Activated naive CD4-positive, alpha-beta T cell treated with anti-CD3 and anti-CD28 coated beads for 36 hours (primary cell): ENCODE measurements at regions of chr3 and their contacts with region 1.

Region 1: GRCh38 chr3:186806089-186807055 is at the start of gene RFC4:
- DNase-seq: peak; percentile 92
- H3K4me3 Mint-ChIP-seq: peak within 1 kb of the TSS; percentile 91
- H3K27ac Mint-ChIP-seq: peak within 1 kb of the TSS; percentile 94
- H3K4me1 Mint-ChIP-seq: peaks cover 19% of the 10 kb centered on the region
- H3K27me3 Mint-ChIP-seq: no peaks in the 10 kb centered on the region
- total RNA-seq, gene RFC4: 135 to 136 TPM

Region 2: GRCh38 chr3:186514296-186515002 is 291.9 kb before region 1 on chr3:
- CTCF ChIA-PET with region 1: no interaction called
- intact Hi-C with region 1: no loop called
- DNase-seq: peak; percentile 71
- H3K4me3 Mint-ChIP-seq: no peak overlapping the region
- H3K27ac Mint-ChIP-seq: peak overlapping the region; percentile 78
- H3K4me1 Mint-ChIP-seq: peaks cover 79% of the 10 kb centered on the region
- H3K27me3 Mint-ChIP-seq: no peaks in the 10 kb centered on the region

Region 3: GRCh38 chr3:186746008-186746407 is 60.4 kb before region 1 on chr3:
- CTCF ChIA-PET with region 1: no interaction called
- intact Hi-C with region 1: no loop called
- DNase-seq: peak; percentile 11
- H3K4me3 Mint-ChIP-seq: no peak overlapping the region
- H3K27ac Mint-ChIP-seq: peak overlapping the region; percentile 54
- H3K4me1 Mint-ChIP-seq: peaks cover 3% of the 10 kb centered on the region
- H3K27me3 Mint-ChIP-seq: no peaks in the 10 kb centered on the region

Region 4: DNA sequence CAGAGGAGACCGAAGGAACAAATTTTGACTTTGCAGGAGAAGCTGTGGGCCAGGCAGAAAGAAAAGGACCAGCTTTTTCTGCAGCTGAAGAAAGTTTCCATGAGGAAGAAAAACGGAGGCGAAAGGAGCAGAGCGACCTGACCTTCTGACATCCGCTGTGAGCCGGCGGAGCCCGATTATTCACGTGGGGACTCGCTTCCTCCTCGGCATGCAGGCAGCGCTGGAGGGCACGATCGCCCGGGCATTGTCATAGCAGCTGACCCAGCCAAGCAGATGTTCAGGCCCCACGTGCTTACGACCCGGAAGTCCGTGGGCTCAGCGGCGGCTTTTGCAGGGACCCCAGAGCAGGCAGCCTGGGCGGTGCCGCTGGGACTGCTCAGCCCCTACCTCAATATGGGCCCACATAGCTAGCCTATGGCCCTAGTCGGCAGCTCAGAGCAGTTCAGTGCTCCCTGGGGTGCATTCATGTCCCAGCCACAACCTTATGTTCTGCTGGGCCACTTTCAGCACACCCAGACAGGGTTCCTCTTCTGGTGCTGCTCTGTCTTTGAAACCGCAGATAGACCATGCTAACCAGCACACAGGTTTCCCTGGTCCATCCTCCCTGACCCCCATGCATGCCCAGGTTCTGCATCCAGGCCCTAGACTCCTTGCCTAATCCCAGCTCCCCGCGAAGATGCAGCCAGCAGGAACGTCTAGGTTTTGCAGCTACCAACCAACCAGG is 33.5 kb before region 1 on chr3:
- CTCF ChIA-PET with region 1: no interaction called
- intact Hi-C with region 1: loop called (anchors 5 kb)
- DNase-seq: peak; percentile 83
- H3K4me3 Mint-ChIP-seq: peak overlapping the region; percentile 95
- H3K27ac Mint-ChIP-seq: peak overlapping the region; percentile 95
- H3K4me1 Mint-ChIP-seq: peaks cover 10% of the 10 kb centered on the region
- H3K27me3 Mint-ChIP-seq: no peaks in the 10 kb centered on the region

Region 5: GRCh38 chr3:186789554-186790260 is 16.7 kb before region 1 on chr3:
- CTCF ChIA-PET with region 1: no interaction called
- intact Hi-C with region 1: no loop called
- DNase-seq: no peak
- H3K4me3 Mint-ChIP-seq: peak overlapping the region; percentile 20
- H3K27ac Mint-ChIP-seq: peak overlapping the region; percentile 6
- H3K4me1 Mint-ChIP-seq: peaks cover 39% of the 10 kb centered on the region
- H3K27me3 Mint-ChIP-seq: no peaks in the 10 kb centered on the region

Region 6: GRCh38 chr3:186821429-186822367 is 15.3 kb after region 1 on chr3:
- CTCF ChIA-PET with region 1: interaction called, 15 read pairs
- intact Hi-C with region 1: loop called (anchors 1 kb)
- DNase-seq: peak; percentile 12
- H3K4me3 Mint-ChIP-seq: no peak overlapping the region
- H3K27ac Mint-ChIP-seq: no peak overlapping the region
- H3K4me1 Mint-ChIP-seq: peaks cover 25% of the 10 kb centered on the region
- H3K27me3 Mint-ChIP-seq: peaks cover 12% of the 10 kb centered on the region

Region 7: GRCh38 chr3:186826976-186827731 is 20.8 kb after region 1 on chr3:
- CTCF ChIA-PET with region 1: interaction called, 15 read pairs
- intact Hi-C with region 1: loop called (anchors 1 kb)
- DNase-seq: peak; percentile 82
- H3K4me3 Mint-ChIP-seq: peak overlapping the region; percentile 78
- H3K27ac Mint-ChIP-seq: peak overlapping the region; percentile 69
- H3K4me1 Mint-ChIP-seq: peaks cover 30% of the 10 kb centered on the region
- H3K27me3 Mint-ChIP-seq: peaks cover 38% of the 10 kb centered on the region